CD4-positive, alpha-beta memory T cell (primary cell): ENCODE measurements at regions of chr1 and their contacts with region 1.

Region 1: GRCh38 chr1:74689621-74690363 is 16.2 kb upstream of the ERICH3 start:
- DNase-seq: peak in 4 of 5 donors; percentile 24 to 47 (median 42)
- H3K4me3 ChIP-seq: no peak overlapping the region
- H3K4me3 Mint-ChIP-seq: no peak overlapping the region
- H3K27ac ChIP-seq: no peak overlapping the region
- H3K27ac Mint-ChIP-seq: peak overlapping the region in 1 of 7 donors; percentile 58
- H3K4me1 ChIP-seq: no peaks in the 10 kb centered on the region
- H3K4me1 Mint-ChIP-seq: peaks cover 0 to 4% (median under 1%) of the 10 kb centered on the region in 4 donors
- H3K27me3 ChIP-seq: no peaks in the 10 kb centered on the region
- H3K27me3 Mint-ChIP-seq: peaks cover 1 to 2% of the 10 kb centered on the region in 2 donors

Region 2: GRCh38 chr1:74005533-74005932 is 684.3 kb before region 1 on chr1:
- CTCF ChIA-PET with region 1: no interaction called
- POLR2A ChIA-PET with region 1: no interaction called
- intact Hi-C with region 1: loop called (anchors 10 kb)
- DNase-seq: no peak
- H3K4me3 ChIP-seq: no peak overlapping the region
- H3K4me3 Mint-ChIP-seq: no peak overlapping the region
- H3K27ac ChIP-seq: no peak overlapping the region
- H3K27ac Mint-ChIP-seq: no peak overlapping the region
- H3K4me1 ChIP-seq: no peaks in the 10 kb centered on the region
- H3K4me1 Mint-ChIP-seq: peaks cover 2 to 10% (median 6%) of the 10 kb centered on the region in 4 donors
- H3K27me3 ChIP-seq: no peaks in the 10 kb centered on the region
- H3K27me3 Mint-ChIP-seq: no peaks in the 10 kb centered on the region

Region 3: GRCh38 chr1:74463333-74463988 is 226.3 kb before region 1 on chr1:
- CTCF ChIA-PET with region 1: no interaction called
- POLR2A ChIA-PET with region 1: no interaction called
- intact Hi-C with region 1: no loop called
- DNase-seq: no peak
- H3K4me3 ChIP-seq: no peak overlapping the region
- H3K4me3 Mint-ChIP-seq: no peak overlapping the region
- H3K27ac ChIP-seq: no peak overlapping the region
- H3K27ac Mint-ChIP-seq: no peak overlapping the region
- H3K4me1 ChIP-seq: no peaks in the 10 kb centered on the region
- H3K4me1 Mint-ChIP-seq: peaks cover 0 to 2% (median 0%) of the 10 kb centered on the region in 4 donors
- H3K27me3 ChIP-seq: no peaks in the 10 kb centered on the region
- H3K27me3 Mint-ChIP-seq: peaks cover 0 to 1% of the 10 kb centered on the region in 2 donors

Region 4: DNA sequence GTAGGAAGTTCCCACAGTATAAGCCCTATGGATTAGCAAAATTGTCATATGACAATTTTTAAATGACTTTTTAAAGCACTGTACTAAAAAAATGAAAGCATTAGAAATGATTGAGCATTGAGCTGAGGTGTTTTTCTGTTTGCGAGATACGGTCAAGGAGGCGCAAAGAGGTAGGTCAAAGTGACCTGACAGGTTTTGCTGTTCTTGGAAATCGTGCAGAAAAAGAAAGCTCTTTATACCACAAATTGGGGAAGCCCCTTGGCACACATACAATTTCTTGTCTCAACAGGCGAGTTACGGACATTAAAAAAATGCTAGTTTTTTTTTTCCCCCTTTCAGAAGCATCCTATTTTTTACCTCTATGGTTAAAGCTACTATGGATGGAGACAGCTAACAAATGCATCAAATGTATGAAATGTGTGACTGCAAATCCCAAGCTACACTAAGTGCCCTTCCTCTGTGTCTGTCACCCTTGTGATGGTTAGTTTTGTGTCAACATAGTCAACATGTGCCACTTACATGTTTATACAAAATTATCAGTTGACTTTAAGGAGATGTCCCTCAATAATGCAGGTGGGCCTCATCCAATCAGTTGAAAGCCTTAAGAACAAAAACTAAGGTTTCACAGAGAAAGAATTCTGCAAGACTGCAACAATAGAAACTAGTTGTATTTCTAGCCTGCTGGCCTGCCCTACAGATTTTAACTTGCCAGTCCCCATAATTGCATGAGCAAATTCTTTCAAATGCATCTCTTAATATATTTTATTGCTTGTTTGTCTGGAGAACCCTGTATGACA is 13.8 kb after region 1 on chr1:
- CTCF ChIA-PET with region 1: interaction called, 18 read pairs
- POLR2A ChIA-PET with region 1: no interaction called
- intact Hi-C with region 1: no loop called
- DNase-seq: no peak
- H3K4me3 ChIP-seq: no peak overlapping the region
- H3K4me3 Mint-ChIP-seq: no peak overlapping the region
- H3K27ac ChIP-seq: no peak overlapping the region
- H3K27ac Mint-ChIP-seq: peak overlapping the region in 1 of 7 donors; percentile 4
- H3K4me1 ChIP-seq: no peaks in the 10 kb centered on the region
- H3K4me1 Mint-ChIP-seq: peaks cover 0 to 1% (median 0%) of the 10 kb centered on the region in 4 donors
- H3K27me3 ChIP-seq: no peaks in the 10 kb centered on the region
- H3K27me3 Mint-ChIP-seq: no peaks in the 10 kb centered on the region

Region 5: DNA sequence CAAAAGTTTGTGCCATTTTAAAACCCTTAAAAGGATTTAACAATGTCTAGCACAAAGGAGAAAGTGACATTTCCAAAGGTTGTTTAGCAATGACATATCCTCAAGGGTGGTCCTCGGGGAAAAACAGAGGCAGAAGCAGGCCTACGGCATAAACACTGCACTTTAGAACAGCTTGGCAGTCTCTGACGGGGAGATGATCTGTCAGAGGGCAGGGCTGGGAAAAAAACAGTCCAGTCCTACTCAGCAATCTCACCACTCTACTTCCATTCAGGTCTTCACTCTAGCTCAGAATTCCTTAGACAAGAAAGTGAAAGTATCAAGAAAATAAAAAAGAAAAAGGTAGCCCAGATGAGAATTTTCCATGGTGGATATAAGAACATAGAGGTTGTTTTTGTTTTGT is 38.9 kb after region 1 on chr1:
- CTCF ChIA-PET with region 1: interaction called, 12 read pairs
- POLR2A ChIA-PET with region 1: no interaction called
- intact Hi-C with region 1: loop called (anchors 2 kb)
- DNase-seq: no peak
- H3K4me3 ChIP-seq: no peak overlapping the region
- H3K4me3 Mint-ChIP-seq: peak overlapping the region in 2 of 8 donors; percentile 2 to 5
- H3K27ac ChIP-seq: no peak overlapping the region
- H3K27ac Mint-ChIP-seq: peak overlapping the region in 1 of 7 donors; percentile 28
- H3K4me1 ChIP-seq: peaks cover 24% of the 10 kb centered on the region
- H3K4me1 Mint-ChIP-seq: peaks cover 16 to 37% (median 32%) of the 10 kb centered on the region in 4 donors
- H3K27me3 ChIP-seq: no peaks in the 10 kb centered on the region
- H3K27me3 Mint-ChIP-seq: no peaks in the 10 kb centered on the region

Region 6: DNA sequence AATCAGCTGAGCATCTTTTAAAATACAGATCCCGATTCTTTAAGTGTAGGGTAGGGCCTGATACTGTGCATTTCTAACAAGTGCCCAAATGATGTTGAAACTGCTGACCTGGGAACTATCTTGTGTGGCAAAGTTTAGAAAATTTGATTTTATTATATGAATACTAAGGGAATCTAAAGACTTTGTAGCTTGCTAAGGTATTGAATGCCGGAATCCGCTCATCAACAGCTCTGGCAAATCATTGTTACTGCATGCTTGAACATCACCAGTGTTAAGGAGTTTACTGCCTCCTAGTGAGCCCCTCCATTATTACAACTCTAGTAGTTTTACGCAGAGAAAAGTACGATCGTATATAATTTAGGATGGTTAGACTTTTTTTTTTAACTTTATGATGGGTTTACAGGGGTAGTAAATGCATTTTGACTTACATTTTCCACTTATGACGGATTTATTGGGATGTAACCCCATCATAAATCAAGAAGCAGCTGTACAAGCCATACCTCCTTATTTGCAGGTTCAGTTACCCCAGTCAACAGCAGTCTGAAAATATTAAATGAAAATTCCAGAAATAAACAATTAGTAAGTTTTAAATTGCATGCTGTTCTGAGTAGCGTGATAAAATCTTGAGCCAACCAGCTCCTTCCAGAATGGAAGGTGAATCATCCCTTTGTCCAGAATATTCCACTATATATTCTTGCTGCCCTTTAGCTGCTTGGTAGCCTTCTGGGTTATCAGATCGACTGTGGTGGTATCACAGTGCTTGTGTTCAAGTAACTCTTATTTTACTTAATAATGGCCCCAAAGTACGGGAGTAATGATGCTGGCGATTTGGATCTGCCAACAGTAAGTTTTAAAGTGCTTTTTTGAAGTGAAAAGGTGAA is 44.1 kb after region 1 on chr1:
- CTCF ChIA-PET with region 1: interaction called, 8 read pairs
- POLR2A ChIA-PET with region 1: no interaction called
- intact Hi-C with region 1: loop called (anchors 2 kb)
- DNase-seq: peak; percentile 57 to 75 (median 69)
- H3K4me3 ChIP-seq: peak overlapping the region; percentile 88 to 89
- H3K4me3 Mint-ChIP-seq: peak overlapping the region; percentile 93 to 100 (median 96)
- H3K27ac ChIP-seq: peak overlapping the region; percentile 75
- H3K27ac Mint-ChIP-seq: peak overlapping the region; percentile 85 to 99 (median 96)
- H3K4me1 ChIP-seq: peaks cover 37% of the 10 kb centered on the region
- H3K4me1 Mint-ChIP-seq: peaks cover 33 to 48% (median 41%) of the 10 kb centered on the region in 4 donors
- H3K27me3 ChIP-seq: no peaks in the 10 kb centered on the region
- H3K27me3 Mint-ChIP-seq: no peaks in the 10 kb centered on the region

Region 7: DNA sequence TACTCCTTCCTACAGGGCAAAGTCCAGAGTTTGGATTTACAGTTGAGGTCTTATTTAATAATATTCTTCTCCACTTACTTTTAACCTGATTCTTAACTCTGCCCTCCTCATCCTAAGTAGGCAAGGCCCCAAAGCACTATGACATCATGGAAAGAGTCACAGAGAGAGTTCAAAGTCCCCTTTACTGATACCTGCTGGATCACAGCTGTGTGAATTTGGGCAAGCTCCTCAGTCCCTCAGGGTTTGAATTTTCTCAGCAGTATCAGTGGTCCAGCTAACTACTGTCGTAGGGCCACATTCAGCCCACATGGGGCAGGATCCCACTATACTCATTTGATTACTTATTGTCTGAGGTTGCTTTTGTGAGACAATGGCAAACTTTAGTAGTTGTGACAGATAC is 59.2 kb after region 1 on chr1:
- CTCF ChIA-PET with region 1: no interaction called
- POLR2A ChIA-PET with region 1: no interaction called
- intact Hi-C with region 1: no loop called
- DNase-seq: no peak
- H3K4me3 ChIP-seq: no peak overlapping the region
- H3K4me3 Mint-ChIP-seq: no peak overlapping the region
- H3K27ac ChIP-seq: no peak overlapping the region
- H3K27ac Mint-ChIP-seq: peak overlapping the region in 1 of 7 donors; percentile 42
- H3K4me1 ChIP-seq: no peaks in the 10 kb centered on the region
- H3K4me1 Mint-ChIP-seq: peaks cover 0 to 6% (median 4%) of the 10 kb centered on the region in 4 donors
- H3K27me3 ChIP-seq: no peaks in the 10 kb centered on the region
- H3K27me3 Mint-ChIP-seq: no peaks in the 10 kb centered on the region

Region 8: GRCh38 chr1:75811211-75811981 is 1121.6 kb after region 1 on chr1:
- CTCF ChIA-PET with region 1: no interaction called
- POLR2A ChIA-PET with region 1: no interaction called
- intact Hi-C with region 1: no loop called
- DNase-seq: no peak
- H3K4me3 ChIP-seq: no peak overlapping the region
- H3K4me3 Mint-ChIP-seq: no peak overlapping the region
- H3K27ac ChIP-seq: no peak overlapping the region
- H3K27ac Mint-ChIP-seq: no peak overlapping the region
- H3K4me1 ChIP-seq: no peaks in the 10 kb centered on the region
- H3K4me1 Mint-ChIP-seq: no peaks in the 10 kb centered on the region
- H3K27me3 ChIP-seq: no peaks in the 10 kb centered on the region
- H3K27me3 Mint-ChIP-seq: no peaks in the 10 kb centered on the region